HEK293T (cell line): ENCODE measurements at regions of chr6 and their contacts with region 1.

Region 1: DNA sequence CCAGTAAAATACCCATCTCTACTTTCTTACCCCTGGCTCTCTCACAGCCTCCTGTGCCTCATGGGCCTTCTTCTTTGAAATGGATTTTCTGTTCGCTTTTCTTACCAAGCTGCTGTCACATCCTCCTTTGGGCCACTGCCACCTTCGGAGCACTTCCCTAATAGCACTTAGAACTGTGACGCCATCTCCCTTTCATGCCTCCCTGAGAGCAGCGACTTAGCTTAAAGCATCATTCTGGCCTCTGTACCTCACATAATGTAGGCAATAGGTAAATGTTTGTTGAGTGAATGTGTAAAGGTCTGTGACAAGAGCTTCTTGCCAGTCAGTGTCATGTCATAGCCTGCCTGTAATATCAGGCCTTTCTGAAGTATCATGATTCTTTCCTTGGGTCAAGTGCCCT is 78.8 kb downstream of the ADGRG6 start:
- DNase-seq: no peak

Region 2: GRCh38 chr6:142329486-142330113 is 51.0 kb before region 1 on chr6:
- CTCF ChIA-PET with region 1: interaction called, 11 read pairs
- POLR2A ChIA-PET with region 1: no interaction called
- DNase-seq: no peak